ENCODE measurements at regions of chr3 and their contacts with region 1.

Region 1: DNA sequence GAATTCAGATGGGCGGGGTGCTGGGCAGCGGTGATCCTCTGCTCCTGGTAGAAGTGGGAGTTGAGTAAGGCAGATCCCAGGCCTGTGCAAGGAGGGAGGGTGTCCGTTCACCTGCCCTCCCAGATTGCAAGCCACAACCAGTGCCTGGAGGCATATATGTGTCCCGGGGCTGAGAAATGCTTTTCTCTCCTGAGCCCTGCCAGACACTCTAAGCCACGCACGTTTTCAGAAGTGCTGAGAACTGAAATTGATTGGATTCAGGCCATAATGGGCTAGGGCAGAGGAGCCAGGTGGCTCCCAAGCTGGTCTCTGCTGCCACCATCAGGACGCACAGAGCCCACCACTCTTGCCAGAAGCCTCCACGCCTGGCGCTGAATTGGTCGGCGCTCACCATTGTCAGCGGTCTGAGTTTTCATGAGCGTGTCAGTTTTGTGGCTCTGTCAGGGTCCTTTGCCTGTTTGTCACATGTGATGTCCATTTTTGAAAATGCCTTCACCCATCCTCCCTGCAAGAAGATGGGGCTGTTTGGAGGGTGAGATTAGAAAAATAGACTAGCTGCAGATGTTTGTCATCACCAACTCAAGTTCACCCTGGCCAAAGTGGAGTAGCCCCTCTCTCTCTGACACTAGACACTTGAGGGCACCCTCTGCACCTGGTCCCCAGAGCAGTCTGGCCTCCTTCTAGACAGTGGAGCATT is 15.4 kb upstream of the BFSP2 start:
- DNase-seq: peak; percentile 55
- H3K4me3 ChIP-seq: no peak overlapping the region
- H3K27ac ChIP-seq: no peak overlapping the region
- H3K4me1 ChIP-seq: peaks cover 16% of the 10 kb centered on the region
- H3K27me3 ChIP-seq: peaks cover 2% of the 10 kb centered on the region
- CTCF ChIP-seq: peak; percentile 58 to 88

Region 2: DNA sequence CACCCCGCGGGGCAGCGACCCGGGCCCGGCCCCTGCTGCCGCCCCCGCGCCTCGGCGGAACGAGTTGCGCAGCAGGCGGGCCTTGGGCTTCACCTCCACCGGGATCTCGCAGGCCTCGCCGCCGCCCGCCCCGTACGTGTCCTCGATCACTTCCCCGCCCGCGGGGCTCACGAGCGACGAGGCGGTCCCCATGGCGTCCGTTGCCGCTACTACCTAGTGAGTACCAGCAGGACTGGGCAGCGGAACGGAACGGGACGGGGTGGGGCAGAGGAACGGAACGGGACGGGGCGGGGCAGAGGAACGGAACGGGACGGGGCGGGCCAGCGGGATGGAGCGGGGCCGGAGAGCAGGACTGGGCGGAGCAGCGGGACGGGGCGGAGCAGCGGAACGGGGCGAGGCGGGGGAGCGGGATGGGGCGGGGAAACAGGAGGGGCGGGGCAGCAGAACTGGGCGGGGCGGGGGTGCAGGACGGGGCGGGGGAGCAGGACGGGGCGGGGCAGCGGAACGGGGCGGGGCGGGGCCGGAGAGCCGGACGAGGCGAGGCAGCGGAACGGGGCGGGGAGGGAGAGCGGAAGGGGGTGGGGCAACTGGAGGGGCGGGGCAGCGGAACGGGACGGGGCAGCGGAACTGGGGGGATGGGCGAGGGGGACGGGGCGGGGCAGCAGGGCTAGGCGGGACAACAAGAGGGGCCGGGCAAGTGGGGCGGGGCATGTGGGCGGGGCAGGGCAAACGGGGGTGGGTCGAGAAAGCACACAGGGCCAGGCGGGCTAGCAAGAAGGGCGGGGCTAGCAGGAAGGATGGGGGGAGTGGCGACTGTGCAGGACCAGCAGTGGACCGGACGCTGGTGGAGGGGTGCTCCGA is 662.1 kb before region 1 on chr3 and contains the start of gene NPHP3:
- CTCF ChIA-PET with region 1: no interaction called
- dilution Hi-C with region 1: loop called (anchors 5 kb)
- in situ Hi-C with region 1: loop called in 1 of 2 experiments (anchors 5 kb)
- intact Hi-C with region 1: no loop called
- DNase-seq: peak; percentile 92
- H3K4me3 ChIP-seq: peak within 1 kb of the TSS; percentile 80 to 96 (median 94)
- H3K27ac ChIP-seq: peak within 1 kb of the TSS; percentile 68
- H3K4me1 ChIP-seq: peaks cover 4% of the 10 kb centered on the region
- H3K27me3 ChIP-seq: no peaks in the 10 kb centered on the region
- CTCF ChIP-seq: no peak
- total RNA-seq, gene NPHP3: 22.8 to 24.5 TPM

Region 3: DNA sequence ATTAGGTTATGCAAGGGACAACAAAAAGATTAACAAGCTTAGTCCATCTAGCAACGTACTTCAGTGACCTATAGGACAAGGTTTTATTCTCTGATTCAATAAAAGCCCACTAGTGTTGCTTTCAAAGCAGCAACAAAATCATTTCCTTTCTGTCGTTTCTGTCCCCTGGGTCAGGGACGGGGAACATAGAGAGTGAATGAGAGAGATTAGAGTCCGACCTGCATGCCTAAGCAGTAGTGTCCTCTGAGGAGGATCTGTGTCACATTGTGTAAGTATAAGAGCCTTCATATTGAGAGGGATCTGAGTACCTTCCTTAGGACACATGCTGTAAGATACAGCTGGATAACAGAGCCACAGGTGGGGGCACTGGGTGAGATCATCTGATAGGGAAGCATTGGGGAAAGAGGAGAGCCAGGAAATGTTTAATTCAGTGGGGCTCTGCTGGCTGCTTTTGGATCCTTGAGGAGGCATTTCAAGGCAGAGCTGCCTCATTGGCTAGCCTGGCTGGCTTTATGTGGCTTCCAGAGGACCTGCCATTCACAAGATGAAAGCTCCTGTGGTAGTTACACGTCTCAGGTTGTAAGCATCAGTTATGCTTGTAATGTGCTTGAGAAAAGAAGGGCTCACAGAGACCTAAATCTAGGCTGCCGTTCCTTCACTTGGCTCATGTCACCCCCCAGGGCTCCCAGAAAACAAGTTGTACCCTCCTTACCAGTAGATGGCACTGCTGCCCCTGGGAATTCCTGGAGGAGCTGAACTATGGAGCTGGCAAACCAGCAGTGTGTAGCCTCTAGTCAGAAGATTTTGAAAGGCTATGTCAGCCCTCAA is 343.6 kb before region 1 on chr3:
- CTCF ChIA-PET with region 1: no interaction called
- dilution Hi-C with region 1: no loop called
- in situ Hi-C with region 1: loop called (anchors 10 kb)
- intact Hi-C with region 1: loop called (anchors 1 kb)
- DNase-seq: peak; percentile 44
- H3K4me3 ChIP-seq: no peak overlapping the region
- H3K27ac ChIP-seq: no peak overlapping the region
- H3K4me1 ChIP-seq: peaks cover 10% of the 10 kb centered on the region
- H3K27me3 ChIP-seq: peaks cover 19% of the 10 kb centered on the region
- CTCF ChIP-seq: peak; percentile 74 to 86

Region 4: GRCh38 chr3:133401374-133402135 is 17.1 kb after region 1 on chr3:
- CTCF ChIA-PET with region 1: no interaction called
- dilution Hi-C with region 1: no loop called
- in situ Hi-C with region 1: no loop called
- intact Hi-C with region 1: loop called (anchors 2 kb)
- DNase-seq: no peak
- H3K4me3 ChIP-seq: no peak overlapping the region
- H3K27ac ChIP-seq: no peak overlapping the region
- H3K4me1 ChIP-seq: no peaks in the 10 kb centered on the region
- H3K27me3 ChIP-seq: no peaks in the 10 kb centered on the region
- CTCF ChIP-seq: no peak

Region 5: DNA sequence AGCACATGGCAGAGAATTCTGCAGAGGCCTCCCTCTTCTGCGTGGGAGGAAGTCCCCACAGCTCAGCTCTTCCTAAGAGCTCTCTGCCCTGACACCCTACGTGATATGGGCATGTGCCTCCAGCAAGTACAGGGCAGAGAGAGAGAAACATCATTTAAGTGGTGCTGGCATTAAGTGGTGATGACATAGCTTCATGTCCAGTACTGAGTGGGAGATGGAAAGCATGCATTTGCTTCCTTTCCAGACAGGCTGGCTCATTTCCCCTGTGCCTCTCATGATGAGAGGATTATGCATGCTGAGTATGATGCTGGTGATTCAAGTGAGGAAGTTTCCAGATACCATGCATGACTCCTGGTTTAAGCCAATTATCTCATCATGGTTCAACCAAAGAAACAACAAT is 42.2 kb after region 1 on chr3:
- CTCF ChIA-PET with region 1: no interaction called
- dilution Hi-C with region 1: no loop called
- in situ Hi-C with region 1: no loop called
- intact Hi-C with region 1: loop called (anchors 2 kb)
- DNase-seq: peak; percentile 46
- H3K4me3 ChIP-seq: no peak overlapping the region
- H3K27ac ChIP-seq: no peak overlapping the region
- H3K4me1 ChIP-seq: peaks cover 5% of the 10 kb centered on the region
- H3K27me3 ChIP-seq: no peaks in the 10 kb centered on the region
- CTCF ChIP-seq: no peak

Region 6: GRCh38 chr3:133475245-133476010 is 90.9 kb after region 1 on chr3:
- CTCF ChIA-PET with region 1: no interaction called
- dilution Hi-C with region 1: loop called (anchors 5 kb)
- in situ Hi-C with region 1: no loop called
- intact Hi-C with region 1: no loop called
- DNase-seq: no peak
- H3K4me3 ChIP-seq: no peak overlapping the region
- H3K27ac ChIP-seq: no peak overlapping the region
- H3K4me1 ChIP-seq: peaks cover 9% of the 10 kb centered on the region
- H3K27me3 ChIP-seq: no peaks in the 10 kb centered on the region
- CTCF ChIP-seq: no peak

Measured in mammary epithelial cell (primary cell).